AG04450 (cell line): ENCODE measurements at regions of chr17 and their contacts with region 1.

Region 1: DNA sequence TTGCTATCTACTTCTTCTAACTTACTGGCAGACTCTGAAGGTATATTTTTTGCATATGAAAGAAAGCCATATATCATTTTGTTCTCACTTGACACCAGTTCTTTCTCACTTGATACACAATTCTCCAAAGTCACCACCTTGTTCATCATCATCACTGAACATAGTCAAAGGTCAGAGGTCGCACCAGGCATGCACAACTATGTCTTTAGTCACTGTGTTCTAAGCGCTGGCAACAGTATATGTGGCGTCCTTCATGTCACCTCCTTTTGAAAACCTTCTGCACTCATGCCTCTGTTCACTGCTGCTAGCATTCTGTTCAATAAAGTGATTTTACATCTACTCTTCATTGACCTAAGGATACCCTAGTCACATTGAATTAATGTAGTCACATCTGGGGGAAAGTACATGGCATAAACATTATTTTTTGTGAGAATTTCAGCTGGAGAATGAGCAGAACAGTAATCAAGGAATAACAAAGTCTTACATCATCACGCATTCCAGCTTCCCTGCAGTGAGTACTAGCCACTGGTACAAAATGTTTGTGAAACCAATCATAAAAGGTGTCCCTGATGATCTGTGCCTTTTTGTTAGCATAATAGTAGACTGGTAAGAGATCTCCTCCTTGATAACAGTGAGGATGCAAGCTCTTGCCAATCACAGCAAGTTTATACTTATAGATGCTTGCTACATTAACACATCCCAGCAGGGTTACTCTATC is 20.5 kb upstream of the TBX4 start:
- DNase-seq: no peak
- H3K4me3 ChIP-seq: no peak overlapping the region
- H3K27ac ChIP-seq: no peak overlapping the region
- H3K27me3 ChIP-seq: no peaks in the 10 kb centered on the region
- CTCF ChIP-seq: no peak

Region 2: GRCh38 chr17:61442891-61443401 is 11.2 kb after region 1 on chr17:
- CTCF ChIA-PET with region 1: interaction called, 3 read pairs
- POLR2A ChIA-PET with region 1: interaction called, 12 read pairs
- DNase-seq: no peak
- H3K4me3 ChIP-seq: no peak overlapping the region
- H3K27ac ChIP-seq: no peak overlapping the region
- H3K27me3 ChIP-seq: peaks cover 11% of the 10 kb centered on the region
- CTCF ChIP-seq: no peak